ENCODE measurements at regions of chr15 and their contacts with region 1.

Region 1: DNA sequence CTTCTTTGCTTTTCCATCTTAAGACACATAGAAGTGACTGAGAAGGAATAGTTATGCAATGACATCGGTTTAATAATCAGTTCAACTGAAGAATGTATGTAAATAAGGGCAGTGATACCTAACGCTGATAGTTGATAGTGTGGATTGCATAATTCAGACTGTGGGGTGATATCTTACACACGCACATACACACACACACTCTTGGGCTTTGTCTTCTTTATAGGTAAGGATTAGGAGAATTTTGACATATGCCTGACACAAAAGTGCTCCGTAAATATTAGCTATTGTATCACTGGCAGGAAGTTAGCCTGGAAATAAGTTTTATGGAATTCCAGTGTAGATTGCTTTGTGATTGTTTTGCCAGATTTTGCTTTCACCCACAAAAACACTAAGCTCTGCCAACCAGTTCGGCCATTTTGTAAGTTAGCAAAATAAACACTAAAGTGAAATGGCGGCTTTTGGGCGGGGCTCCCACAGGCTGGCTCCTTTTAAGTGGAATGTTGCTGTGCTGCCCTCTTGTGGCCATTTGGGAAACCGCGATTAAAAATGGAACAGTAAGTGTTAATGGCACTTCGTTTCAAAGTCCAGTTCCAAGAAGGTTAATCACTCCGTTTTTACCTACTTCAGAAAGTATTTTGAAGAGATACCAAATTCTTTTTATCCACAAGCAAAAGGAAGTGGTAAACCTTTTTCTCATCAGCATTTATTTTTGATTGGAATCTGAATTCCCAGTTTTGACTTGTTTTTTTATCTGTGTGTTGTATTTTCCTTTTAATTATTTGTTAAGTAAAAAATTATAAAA is 17.7 kb downstream of the CHD2 start:
- DNase-seq: peak; percentile 86
- H3K4me3 Mint-ChIP-seq: peak overlapping the region; percentile 53
- H3K27ac Mint-ChIP-seq: peak overlapping the region; percentile 30
- H3K4me1 Mint-ChIP-seq: peaks cover 91% of the 10 kb centered on the region
- H3K27me3 Mint-ChIP-seq: no peaks in the 10 kb centered on the region

Region 2: GRCh38 chr15:92625251-92625980 is 292.4 kb before region 1 on chr15:
- intact Hi-C with region 1: loop called (anchors 5 kb)
- DNase-seq: no peak
- H3K4me3 Mint-ChIP-seq: peak overlapping the region; percentile 27
- H3K27ac Mint-ChIP-seq: peak overlapping the region; percentile 74
- H3K4me1 Mint-ChIP-seq: peaks cover 15% of the 10 kb centered on the region
- H3K27me3 Mint-ChIP-seq: peaks cover 5% of the 10 kb centered on the region

Region 3: DNA sequence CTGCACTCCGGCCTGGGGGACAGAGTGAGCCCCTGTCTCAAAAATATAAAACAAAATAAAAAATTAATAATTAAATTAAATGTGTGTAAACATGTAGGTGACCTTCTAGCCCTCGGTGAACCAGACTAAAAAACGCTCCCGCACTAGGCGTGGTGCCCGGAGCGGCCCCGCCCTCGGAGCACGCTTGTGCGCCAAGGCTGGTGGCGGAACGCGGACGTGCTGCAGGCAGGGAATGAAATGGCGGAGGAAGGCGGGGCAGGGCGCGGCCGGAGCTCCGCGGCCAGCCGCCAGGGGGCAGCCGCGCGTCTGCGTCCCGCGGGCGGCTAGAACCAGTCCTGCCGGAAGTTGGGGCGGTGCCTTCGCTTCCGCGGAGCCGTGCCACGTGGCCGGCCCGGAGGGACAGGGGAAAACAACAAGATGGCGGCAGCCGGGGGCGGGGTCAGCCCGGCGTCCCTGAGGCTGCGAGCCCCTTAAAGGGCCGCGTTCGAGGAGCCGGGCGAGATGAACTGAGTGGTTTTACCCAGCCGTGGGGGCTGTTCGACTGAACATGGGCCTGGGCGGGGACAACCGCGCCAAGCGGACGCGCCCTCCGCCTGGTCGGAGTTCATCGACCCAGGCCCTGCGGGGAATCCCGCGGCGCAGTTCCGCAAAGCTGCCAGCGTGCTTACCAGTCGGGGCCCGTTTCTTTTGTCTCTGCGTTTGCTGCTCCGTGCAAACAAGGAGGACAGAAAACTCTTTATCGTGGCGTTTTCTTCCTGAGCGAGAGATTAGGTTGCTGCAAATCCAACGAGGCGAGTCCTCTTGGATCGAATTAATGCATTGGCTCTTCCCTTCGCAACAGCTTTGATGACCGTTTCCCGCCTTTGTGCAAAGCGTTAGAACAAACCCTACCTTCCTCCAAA is 108.6 kb before region 1 on chr15:
- intact Hi-C with region 1: loop called (anchors 1 kb)
- DNase-seq: peak; percentile 100
- H3K4me3 Mint-ChIP-seq: peak overlapping the region; percentile 94
- H3K27ac Mint-ChIP-seq: peak overlapping the region; percentile 98
- H3K4me1 Mint-ChIP-seq: peaks cover 60% of the 10 kb centered on the region
- H3K27me3 Mint-ChIP-seq: no peaks in the 10 kb centered on the region

Region 4: DNA sequence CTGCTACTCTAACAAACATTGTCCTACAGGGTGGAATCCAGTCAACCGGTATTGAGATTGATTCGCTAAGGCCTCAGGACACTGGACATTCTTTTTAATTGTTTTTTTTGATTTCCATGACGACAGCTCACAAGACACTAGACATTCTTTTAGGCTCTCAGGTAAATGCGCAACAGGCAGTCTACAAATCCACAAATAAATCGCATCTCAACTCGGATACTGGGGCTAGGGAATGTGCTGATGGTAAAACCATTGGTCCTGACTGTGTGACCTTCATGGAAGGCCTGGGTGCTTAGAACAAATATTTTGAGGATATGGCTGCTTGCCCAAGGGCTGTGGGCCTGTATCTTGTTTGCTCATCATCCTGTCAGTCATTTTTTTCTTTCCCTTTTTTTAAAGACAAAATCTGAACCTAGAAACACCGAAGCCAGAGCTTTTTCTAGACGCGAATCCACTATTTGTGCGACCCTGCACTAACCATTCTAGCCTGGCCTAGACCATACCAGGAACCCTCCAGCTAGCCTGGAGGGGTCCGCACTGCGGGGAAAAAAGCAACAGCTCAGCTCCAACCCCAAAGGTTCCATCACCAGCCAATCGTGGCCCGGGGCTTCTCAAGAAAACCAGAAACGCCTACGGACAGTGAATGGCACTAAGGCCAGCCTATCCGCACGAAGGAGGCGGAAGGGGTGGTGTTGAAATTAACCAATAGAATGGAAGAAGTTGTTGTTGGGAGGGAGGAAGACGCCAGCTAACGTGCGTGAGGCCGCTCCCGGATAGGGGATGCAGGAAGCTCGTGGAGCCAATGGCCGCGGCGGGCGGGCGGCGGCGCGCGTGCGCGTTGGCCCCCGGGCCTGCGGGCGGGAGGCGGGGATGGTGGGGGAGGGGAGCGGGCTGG is 35.8 kb before region 1 on chr15:
- intact Hi-C with region 1: loop called (anchors 5 kb)
- DNase-seq: peak; percentile 97
- H3K4me3 Mint-ChIP-seq: peak overlapping the region; percentile 87
- H3K27ac Mint-ChIP-seq: peak overlapping the region; percentile 97
- H3K4me1 Mint-ChIP-seq: peaks cover 60% of the 10 kb centered on the region
- H3K27me3 Mint-ChIP-seq: no peaks in the 10 kb centered on the region

Region 5: GRCh38 chr15:92929002-92929401 is 11.2 kb after region 1 on chr15:
- intact Hi-C with region 1: loop called (anchors 1 kb)
- DNase-seq: no peak
- H3K4me3 Mint-ChIP-seq: no peak overlapping the region
- H3K27ac Mint-ChIP-seq: no peak overlapping the region
- H3K4me1 Mint-ChIP-seq: peaks cover 62% of the 10 kb centered on the region
- H3K27me3 Mint-ChIP-seq: no peaks in the 10 kb centered on the region